Gastrocnemius medialis (tissue), 4 donors: ENCODE measurements at regions of chr1 and their contacts with region 1.

Region 1: DNA sequence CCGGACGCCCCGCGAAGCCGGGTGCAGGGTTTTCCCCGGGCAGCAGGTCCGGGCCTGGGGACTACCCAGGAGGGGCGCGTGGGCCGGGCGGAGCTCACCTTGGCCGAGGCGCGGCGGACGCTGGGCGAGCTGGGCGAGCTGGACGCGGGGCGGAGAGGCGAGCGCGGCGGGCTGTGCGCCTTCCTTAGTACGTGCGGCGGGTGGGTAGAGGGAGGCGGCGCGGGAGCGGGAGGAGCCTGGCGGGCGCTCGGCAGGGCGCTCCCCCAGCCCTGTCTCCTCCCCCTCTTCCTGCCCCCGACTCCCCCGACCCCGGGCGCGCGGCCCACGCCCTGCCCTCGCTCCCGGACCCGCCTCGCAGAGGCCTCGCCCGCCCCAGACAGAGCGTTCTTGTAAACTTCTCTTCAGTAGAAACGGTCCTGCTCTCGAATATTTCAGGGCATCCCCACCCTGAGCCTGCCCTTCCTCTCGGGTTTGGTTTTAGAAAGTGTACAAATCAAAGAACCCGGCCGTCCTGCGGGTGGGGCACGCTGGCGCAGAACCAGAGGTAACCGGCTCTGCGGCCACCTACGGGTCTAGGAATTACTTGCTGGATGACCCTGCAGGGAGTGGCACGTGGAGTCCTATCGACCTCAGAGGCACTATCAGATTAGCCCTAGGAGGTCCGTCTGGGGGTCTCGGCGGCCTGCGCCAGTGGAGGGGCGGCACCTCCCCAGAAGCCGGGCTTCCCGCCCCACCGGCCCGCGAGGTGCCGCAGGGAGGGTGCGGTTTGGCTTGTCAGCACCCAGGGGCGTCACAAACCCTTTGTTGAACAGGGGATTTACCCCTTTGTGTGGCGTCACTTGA is at the start of gene S100A10:
- DNase-seq: peak; percentile 56 to 58
- ATAC-seq: peak; percentile 43 to 46
- H3K4me3 ChIP-seq: peak within 1 kb of the TSS; percentile 57 to 73 (median 62)
- H3K27ac ChIP-seq: peak within 1 kb of the TSS; percentile 67 to 79 (median 76)
- H3K4me1 ChIP-seq: peaks cover 25 to 31% of the 10 kb centered on the region in 2 donors
- H3K27me3 ChIP-seq: peaks cover 3 to 18% (median 15%) of the 10 kb centered on the region in 3 donors
- CTCF ChIP-seq: no peak
- POLR2A ChIP-seq: peak; percentile 51 to 67
- total RNA-seq, gene S100A10: 6.4 to 60.3 (median 28.0) TPM

Region 2: GRCh38 chr1:151547119-151547899 is 446.6 kb before region 1 on chr1:
- in situ Hi-C with region 1: no loop called
- intact Hi-C with region 1: no loop called
- DNase-seq: peak in 1 of 2 donors; percentile 40
- ATAC-seq: peak in 1 of 2 donors; percentile 46
- H3K4me3 ChIP-seq: no peak overlapping the region
- H3K27ac ChIP-seq: peak overlapping the region in 1 of 4 donors; percentile 11
- H3K4me1 ChIP-seq: peaks cover 0 to 13% of the 10 kb centered on the region in 2 donors
- H3K27me3 ChIP-seq: no peaks in the 10 kb centered on the region
- CTCF ChIP-seq: no peak
- POLR2A ChIP-seq: no peak

Region 3: DNA sequence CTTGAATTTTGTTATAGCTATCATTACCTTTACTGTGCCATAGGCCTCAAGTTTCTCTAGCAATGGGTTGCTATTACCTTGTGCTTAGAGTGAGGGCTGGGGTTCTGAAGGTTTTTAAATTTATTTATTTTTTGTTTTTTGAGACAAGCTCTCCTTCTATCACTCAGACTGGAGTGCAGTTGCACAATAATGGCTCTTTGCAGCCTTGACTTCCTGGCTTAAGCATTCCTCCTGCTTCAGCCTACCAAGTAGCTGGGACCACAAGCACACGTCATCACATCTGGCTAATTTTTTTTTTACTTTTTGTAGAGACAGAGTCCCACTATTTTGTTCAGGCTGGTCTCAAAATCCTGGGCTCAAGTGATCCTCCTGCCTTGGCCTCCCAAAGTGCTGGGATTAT is 340.5 kb before region 1 on chr1:
- in situ Hi-C with region 1: no loop called
- intact Hi-C with region 1: no loop called
- DNase-seq: no peak
- ATAC-seq: no peak
- H3K4me3 ChIP-seq: no peak overlapping the region
- H3K27ac ChIP-seq: peak overlapping the region in 1 of 4 donors; percentile 21
- H3K4me1 ChIP-seq: peaks cover 0 to 13% of the 10 kb centered on the region in 2 donors
- H3K27me3 ChIP-seq: no peaks in the 10 kb centered on the region
- CTCF ChIP-seq: no peak
- POLR2A ChIP-seq: no peak

Region 4: GRCh38 chr1:151867785-151868411 is 126.0 kb before region 1 on chr1:
- in situ Hi-C with region 1: no loop called
- intact Hi-C with region 1: no loop called
- DNase-seq: no peak
- ATAC-seq: no peak
- H3K4me3 ChIP-seq: no peak overlapping the region
- H3K27ac ChIP-seq: no peak overlapping the region
- H3K4me1 ChIP-seq: no peaks in the 10 kb centered on the region
- H3K27me3 ChIP-seq: no peaks in the 10 kb centered on the region
- CTCF ChIP-seq: no peak
- POLR2A ChIP-seq: no peak

Region 5: GRCh38 chr1:151934048-151934493 is 59.8 kb before region 1 on chr1:
- in situ Hi-C with region 1: loop called (anchors 5 to 10 kb)
- intact Hi-C with region 1: no loop called
- DNase-seq: no peak
- ATAC-seq: peak; percentile 74 to 91
- H3K4me3 ChIP-seq: no peak overlapping the region
- H3K27ac ChIP-seq: no peak overlapping the region
- H3K4me1 ChIP-seq: peaks cover 0 to 3% of the 10 kb centered on the region in 2 donors
- H3K27me3 ChIP-seq: no peaks in the 10 kb centered on the region
- CTCF ChIP-seq: peak; percentile 58 to 83 (median 74)
- POLR2A ChIP-seq: no peak

Region 6: GRCh38 chr1:151945725-151946364 is 48.0 kb before region 1 on chr1:
- in situ Hi-C with region 1: no loop called
- intact Hi-C with region 1: loop called (anchors 5 kb)
- DNase-seq: peak; percentile 65 to 83
- ATAC-seq: peak; percentile 80 to 81
- H3K4me3 ChIP-seq: no peak overlapping the region
- H3K27ac ChIP-seq: peak overlapping the region; percentile 47 to 70 (median 66)
- H3K4me1 ChIP-seq: peaks cover 8 to 13% of the 10 kb centered on the region in 2 donors
- H3K27me3 ChIP-seq: peaks cover 0 to 2% (median 0%) of the 10 kb centered on the region in 3 donors
- CTCF ChIP-seq: no peak
- POLR2A ChIP-seq: no peak

Region 7: GRCh38 chr1:151961833-151962232 is 32.0 kb before region 1 on chr1:
- in situ Hi-C with region 1: no loop called
- intact Hi-C with region 1: loop called (anchors 5 kb)
- DNase-seq: no peak
- ATAC-seq: no peak
- H3K4me3 ChIP-seq: no peak overlapping the region
- H3K27ac ChIP-seq: peak overlapping the region in 2 of 4 donors; percentile 13 to 30
- H3K4me1 ChIP-seq: no peaks in the 10 kb centered on the region
- H3K27me3 ChIP-seq: no peaks in the 10 kb centered on the region
- CTCF ChIP-seq: no peak
- POLR2A ChIP-seq: no peak

Region 8: GRCh38 chr1:151976858-151977257 is 17.0 kb before region 1 on chr1:
- in situ Hi-C with region 1: no loop called
- intact Hi-C with region 1: loop called (anchors 1 kb)
- DNase-seq: no peak
- ATAC-seq: no peak
- H3K4me3 ChIP-seq: no peak overlapping the region
- H3K27ac ChIP-seq: no peak overlapping the region
- H3K4me1 ChIP-seq: peaks cover 0 to 4% of the 10 kb centered on the region in 2 donors
- H3K27me3 ChIP-seq: no peaks in the 10 kb centered on the region
- CTCF ChIP-seq: no peak
- POLR2A ChIP-seq: no peak

Region 9: DNA sequence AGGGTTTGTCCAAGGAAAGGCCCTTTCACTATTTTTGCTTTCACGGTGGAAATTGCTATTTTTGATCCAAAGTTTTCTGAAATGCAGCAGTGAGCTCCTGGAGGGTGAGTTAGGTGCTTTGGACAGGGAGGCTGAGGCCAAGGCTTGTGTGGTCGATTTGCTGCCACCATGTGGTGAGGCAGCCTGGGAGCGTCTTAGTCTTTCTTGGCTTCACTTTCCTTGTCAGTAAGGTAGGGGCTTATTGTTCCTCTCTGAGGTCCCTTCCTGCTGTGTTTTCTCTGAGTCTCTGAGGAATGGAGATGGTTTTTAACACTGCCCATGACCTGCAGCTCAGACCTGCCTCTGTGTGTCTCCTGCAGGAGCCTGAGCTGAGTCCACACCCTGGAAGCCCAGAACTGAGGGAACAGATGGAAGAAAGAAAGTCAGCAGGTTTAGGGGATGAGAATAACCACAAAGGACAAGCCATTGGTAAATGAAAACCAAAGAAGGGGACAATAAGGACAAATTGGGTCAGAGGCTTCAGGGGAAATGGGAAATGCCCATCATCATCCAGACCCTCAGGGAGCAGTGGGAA is 19.9 kb after region 1 on chr1:
- in situ Hi-C with region 1: no loop called
- intact Hi-C with region 1: no loop called
- DNase-seq: no peak
- ATAC-seq: no peak
- H3K4me3 ChIP-seq: no peak overlapping the region
- H3K27ac ChIP-seq: no peak overlapping the region
- H3K4me1 ChIP-seq: no peaks in the 10 kb centered on the region
- H3K27me3 ChIP-seq: peaks cover 0 to 3% (median 0%) of the 10 kb centered on the region in 3 donors
- CTCF ChIP-seq: peak in 2 of 5 experiments; percentile 20 to 39
- POLR2A ChIP-seq: no peak

Region 10: DNA sequence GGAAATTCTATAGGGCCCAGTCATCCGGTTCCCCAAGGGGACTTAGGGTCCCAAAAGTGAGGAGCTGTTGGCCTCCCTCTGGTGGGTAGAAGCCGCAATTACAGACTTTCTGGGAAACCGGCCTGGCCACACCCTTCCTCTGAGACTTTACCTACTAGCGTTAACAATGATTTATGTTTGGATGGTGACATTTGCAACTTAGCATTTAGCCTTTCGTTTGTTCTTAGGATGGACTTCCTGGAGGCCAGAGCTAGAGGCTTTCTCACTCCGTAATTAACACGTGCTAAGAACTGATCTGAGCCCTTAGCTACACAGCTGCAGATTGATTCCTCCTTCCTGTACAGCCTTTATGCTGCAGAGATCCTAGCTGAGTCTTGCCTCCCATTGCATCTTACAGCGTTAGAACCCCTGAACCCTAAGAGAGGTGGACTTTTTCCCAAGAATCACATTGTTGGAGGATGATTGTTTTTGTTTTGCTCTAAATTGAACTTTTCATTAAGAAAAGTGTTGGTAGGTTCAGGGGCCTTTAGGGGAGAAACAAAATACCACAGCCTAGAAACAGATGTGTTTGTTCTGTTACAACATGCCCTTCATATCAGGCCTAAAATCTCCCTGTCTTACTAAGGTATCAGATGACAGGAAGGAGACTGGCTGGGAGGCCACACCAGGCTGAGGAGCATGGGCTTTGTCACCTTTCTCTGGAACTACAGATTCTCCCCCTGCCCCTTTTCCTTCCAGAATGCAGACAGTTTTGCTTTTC is 41.0 kb after region 1 on chr1:
- in situ Hi-C with region 1: no loop called
- intact Hi-C with region 1: loop called (anchors 5 kb)
- DNase-seq: no peak
- ATAC-seq: peak in 1 of 2 donors; percentile 27
- H3K4me3 ChIP-seq: peak overlapping the region; percentile 60 to 69 (median 64)
- H3K27ac ChIP-seq: peak overlapping the region; percentile 76 to 84 (median 80)
- H3K4me1 ChIP-seq: peaks cover 3 to 17% of the 10 kb centered on the region in 2 donors
- H3K27me3 ChIP-seq: peaks cover 0 to 16% (median 9%) of the 10 kb centered on the region in 3 donors
- CTCF ChIP-seq: peak in 4 of 5 experiments; percentile 32 to 56 (median 44)
- POLR2A ChIP-seq: no peak